HCT116 (cell line): ENCODE measurements at regions of chr7 and their contacts with region 1.

Region 1: GRCh38 chr7:31488562-31489203 is 25.2 kb upstream of the ITPRID1 start:
- DNase-seq: peak; percentile 41
- ATAC-seq: peak; percentile 100
- H3K4me3 ChIP-seq: no peak overlapping the region
- H3K27ac ChIP-seq: no peak overlapping the region
- H3K4me1 ChIP-seq: no peaks in the 10 kb centered on the region; a peak in 1 of 4 replicates
- H3K27me3 ChIP-seq: peaks cover 6% of the 10 kb centered on the region; the same call in 1 of the 2 replicates
- CTCF ChIP-seq: peak; percentile 60 to 93 (median 92); a peak in 5 of 6 replicates
- POLR2A ChIP-seq: no peak
- RAD21 ChIP-seq: peak; percentile 74

Region 2: GRCh38 chr7:31192986-31193385 is 295.7 kb before region 1 on chr7:
- CTCF ChIA-PET with region 1: interaction called, 3 read pairs
- POLR2A ChIA-PET with region 1: no interaction called
- RAD21 ChIA-PET with region 1: no interaction called
- intact Hi-C with region 1: loop called (anchors 1 kb)
- DNase-seq: peak; percentile 36
- ATAC-seq: peak; percentile 99
- H3K4me3 ChIP-seq: no peak overlapping the region
- H3K27ac ChIP-seq: no peak overlapping the region
- H3K4me1 ChIP-seq: no peaks in the 10 kb centered on the region
- H3K27me3 ChIP-seq: peaks cover 5% of the 10 kb centered on the region; the same call in 1 of the 2 replicates
- CTCF ChIP-seq: peak; percentile 48 to 91 (median 87); a peak in 5 of 6 replicates
- POLR2A ChIP-seq: no peak
- RAD21 ChIP-seq: peak; percentile 85

Region 3: GRCh38 chr7:31373337-31374289 is 115.1 kb before region 1 on chr7:
- CTCF ChIA-PET with region 1: interaction called, 4 read pairs
- POLR2A ChIA-PET with region 1: no interaction called
- RAD21 ChIA-PET with region 1: no interaction called
- intact Hi-C with region 1: loop called (anchors 1 kb)
- DNase-seq: peak; percentile 51
- ATAC-seq: peak; percentile 89
- H3K4me3 ChIP-seq: no peak overlapping the region
- H3K27ac ChIP-seq: no peak overlapping the region
- H3K4me1 ChIP-seq: no peaks in the 10 kb centered on the region
- H3K27me3 ChIP-seq: peaks cover 38% of the 10 kb centered on the region
- CTCF ChIP-seq: peak; percentile 45 to 76 (median 72); a peak in 5 of 6 replicates
- POLR2A ChIP-seq: no peak
- RAD21 ChIP-seq: peak; percentile 70